ENCODE measurements at regions of chr17 and their contacts with region 1.

Region 1: GRCh38 chr17:42720996-42721583 is 23.8 kb downstream of the EZH1 start:
- DNase-seq: no peak
- H3K4me3 Mint-ChIP-seq: no peak overlapping the region
- H3K27ac Mint-ChIP-seq: no peak overlapping the region
- H3K4me1 Mint-ChIP-seq: peaks cover 2% of the 10 kb centered on the region
- H3K27me3 Mint-ChIP-seq: no peaks in the 10 kb centered on the region

Region 2: GRCh38 chr17:42760652-42761581 is 39.8 kb after region 1 on chr17 and contains the start of gene RAMP2:
- CTCF ChIA-PET with region 1: interaction called, 20 read pairs
- POLR2A ChIA-PET with region 1: no interaction called
- DNase-seq: no peak
- H3K4me3 Mint-ChIP-seq: no peak within 1 kb of the TSS
- H3K27ac Mint-ChIP-seq: no peak within 1 kb of the TSS
- H3K4me1 Mint-ChIP-seq: peaks cover 7% of the 10 kb centered on the region
- H3K27me3 Mint-ChIP-seq: peaks cover 62% of the 10 kb centered on the region
- total RNA-seq, gene RAMP2: not detected